ENCODE measurements at regions of chr16 and their contacts with region 1.

Region 1: GRCh38 chr16:88368036-88368435 is 14.7 kb upstream of the ZNF469 start:
- DNase-seq: no peak
- H3K4me3 ChIP-seq: no peak overlapping the region
- H3K27ac ChIP-seq: no peak overlapping the region
- H3K4me1 ChIP-seq: no peaks in the 10 kb centered on the region
- H3K27me3 ChIP-seq: no peaks in the 10 kb centered on the region
- CTCF ChIP-seq: no peak
- POLR2A ChIP-seq: no peak

Region 2: GRCh38 chr16:88292007-88292970 is 75.7 kb before region 1 on chr16:
- intact Hi-C with region 1: loop called (anchors 2 kb)
- DNase-seq: no peak
- H3K4me3 ChIP-seq: no peak overlapping the region
- H3K27ac ChIP-seq: no peak overlapping the region
- H3K4me1 ChIP-seq: no peaks in the 10 kb centered on the region
- H3K27me3 ChIP-seq: no peaks in the 10 kb centered on the region
- CTCF ChIP-seq: no peak
- POLR2A ChIP-seq: no peak

Region 3: GRCh38 chr16:88437373-88437964 is 69.4 kb after region 1 on chr16:
- intact Hi-C with region 1: no loop called
- DNase-seq: no peak
- H3K4me3 ChIP-seq: peak overlapping the region in 2 of 3 donors; percentile 10 to 29
- H3K27ac ChIP-seq: no peak overlapping the region
- H3K4me1 ChIP-seq: no peaks in the 10 kb centered on the region
- H3K27me3 ChIP-seq: no peaks in the 10 kb centered on the region
- CTCF ChIP-seq: peak; percentile 81 to 91 (median 83)
- POLR2A ChIP-seq: no peak

Region 4: DNA sequence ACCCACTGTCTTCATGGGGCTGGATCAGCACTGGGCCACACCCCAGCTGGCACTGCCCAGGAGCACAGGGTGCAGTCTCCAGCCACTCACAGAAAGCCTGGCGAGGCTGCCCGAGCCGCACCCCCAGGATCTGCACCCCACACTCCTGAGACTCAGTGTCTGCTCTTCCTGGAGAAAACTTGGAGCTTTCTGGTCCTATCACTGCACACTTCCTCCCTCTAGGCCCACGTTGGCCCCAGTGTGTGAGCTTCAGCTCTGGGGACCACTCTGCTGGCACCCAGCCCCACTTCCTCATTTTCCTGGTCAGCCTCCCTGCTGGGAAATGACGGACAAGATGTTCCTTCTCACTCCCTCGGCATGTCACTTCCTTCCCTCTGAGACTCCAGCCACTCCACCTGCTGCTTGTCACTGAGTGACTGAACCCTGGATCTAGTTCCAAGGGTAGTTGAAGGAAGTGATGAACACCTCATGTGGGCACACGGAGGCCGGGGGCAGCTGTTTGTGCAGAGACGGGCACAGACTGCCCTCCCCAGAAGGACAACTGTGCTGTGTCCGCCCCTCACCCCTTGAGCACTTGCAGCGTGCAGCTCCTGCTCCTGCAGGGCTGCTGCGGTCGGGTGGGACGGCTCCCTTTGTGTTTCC is 231.2 kb after region 1 on chr16:
- intact Hi-C with region 1: no loop called
- DNase-seq: peak in 1 of 2 donors; percentile 42
- H3K4me3 ChIP-seq: no peak overlapping the region
- H3K27ac ChIP-seq: peak overlapping the region in 1 of 2 donors; percentile 59
- H3K4me1 ChIP-seq: no peaks in the 10 kb centered on the region
- H3K27me3 ChIP-seq: no peaks in the 10 kb centered on the region
- CTCF ChIP-seq: no peak
- POLR2A ChIP-seq: no peak

Region 5: DNA sequence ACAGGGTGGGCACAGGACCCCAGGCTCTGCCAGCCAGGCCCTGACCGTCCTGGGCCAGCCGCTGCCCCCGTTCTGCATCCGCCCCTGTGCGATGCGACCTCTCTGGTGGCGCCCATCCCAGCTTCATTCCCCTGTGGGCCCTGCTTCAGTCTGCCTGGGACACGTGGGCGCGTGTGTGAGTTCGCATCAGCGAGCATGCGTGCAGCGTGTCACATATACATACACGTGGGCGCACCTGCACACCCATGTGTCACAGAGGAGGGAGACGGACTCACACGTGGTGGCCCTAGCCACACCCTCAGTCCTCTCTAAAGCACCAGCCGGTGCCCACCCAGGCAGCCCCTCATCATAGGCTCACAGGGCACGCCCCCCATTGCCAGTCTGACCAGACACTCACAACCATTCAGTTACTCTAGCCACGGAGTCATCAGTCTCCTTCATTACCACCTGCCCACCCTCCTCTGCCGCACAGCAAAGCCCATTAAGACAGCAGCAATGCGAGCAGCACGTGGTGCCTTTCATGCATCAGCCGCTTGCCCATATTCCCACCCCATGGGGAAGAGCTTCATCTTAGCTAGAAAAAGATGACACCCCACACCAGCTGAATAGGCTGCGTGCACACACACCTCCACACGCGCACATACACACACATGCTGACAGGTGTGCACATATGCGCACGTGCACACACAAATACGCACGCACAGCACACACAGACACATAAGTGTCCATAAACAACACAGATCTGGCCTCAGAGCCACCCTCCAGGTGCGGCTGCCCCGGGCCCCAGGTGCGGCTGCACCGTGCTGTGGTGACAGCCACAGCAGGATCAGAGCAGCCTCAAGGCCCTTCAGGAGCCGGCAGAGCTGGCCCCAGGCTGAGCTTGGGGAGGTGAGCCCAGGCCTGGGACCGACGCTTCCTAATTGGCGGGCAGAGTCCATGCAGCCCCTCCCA is 794.0 kb after region 1 on chr16:
- intact Hi-C with region 1: loop called (anchors 5 kb)
- DNase-seq: no peak
- H3K4me3 ChIP-seq: no peak overlapping the region
- H3K27ac ChIP-seq: no peak overlapping the region
- H3K4me1 ChIP-seq: no peaks in the 10 kb centered on the region
- H3K27me3 ChIP-seq: peaks cover 0 to 44% of the 10 kb centered on the region in 2 donors
- CTCF ChIP-seq: no peak
- POLR2A ChIP-seq: no peak